B cell (primary cell): ENCODE measurements at regions of chr7 and their contacts with region 1.

Region 1: DNA sequence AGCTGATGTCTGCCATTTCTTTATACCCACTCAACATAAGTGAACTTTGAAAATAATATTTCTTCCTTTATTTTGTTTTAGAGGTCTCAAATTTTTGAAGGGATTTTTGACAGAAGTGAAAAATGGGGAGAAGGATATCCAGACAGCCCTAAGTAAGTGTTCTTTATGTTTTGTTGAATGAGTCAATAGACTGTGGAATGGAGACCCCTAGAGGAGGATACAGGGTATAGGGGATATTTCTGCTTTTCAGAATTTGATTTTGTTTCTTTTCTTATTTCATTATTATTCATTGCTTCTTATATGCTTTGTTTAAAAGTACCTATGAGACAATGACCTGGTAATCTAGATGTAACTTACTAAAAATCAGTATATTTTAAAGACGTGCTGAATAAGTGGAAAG is 34.4 kb downstream of the PLEKHA8 start:
- DNase-seq: peak; percentile 56
- ATAC-seq: peak; percentile 67
- H3K4me3 ChIP-seq: no peak overlapping the region
- H3K4me3 Mint-ChIP-seq: no peak overlapping the region
- H3K27ac ChIP-seq: no peak overlapping the region
- H3K27ac Mint-ChIP-seq: peak overlapping the region; percentile 59
- H3K4me1 ChIP-seq: peaks cover 5 to 6% of the 10 kb centered on the region in 2 donors
- H3K4me1 Mint-ChIP-seq: peaks cover 14% of the 10 kb centered on the region
- H3K27me3 ChIP-seq: no peaks in the 10 kb centered on the region
- H3K27me3 Mint-ChIP-seq: no peaks in the 10 kb centered on the region
- CTCF ChIP-seq: peak; percentile 76

Region 2: DNA sequence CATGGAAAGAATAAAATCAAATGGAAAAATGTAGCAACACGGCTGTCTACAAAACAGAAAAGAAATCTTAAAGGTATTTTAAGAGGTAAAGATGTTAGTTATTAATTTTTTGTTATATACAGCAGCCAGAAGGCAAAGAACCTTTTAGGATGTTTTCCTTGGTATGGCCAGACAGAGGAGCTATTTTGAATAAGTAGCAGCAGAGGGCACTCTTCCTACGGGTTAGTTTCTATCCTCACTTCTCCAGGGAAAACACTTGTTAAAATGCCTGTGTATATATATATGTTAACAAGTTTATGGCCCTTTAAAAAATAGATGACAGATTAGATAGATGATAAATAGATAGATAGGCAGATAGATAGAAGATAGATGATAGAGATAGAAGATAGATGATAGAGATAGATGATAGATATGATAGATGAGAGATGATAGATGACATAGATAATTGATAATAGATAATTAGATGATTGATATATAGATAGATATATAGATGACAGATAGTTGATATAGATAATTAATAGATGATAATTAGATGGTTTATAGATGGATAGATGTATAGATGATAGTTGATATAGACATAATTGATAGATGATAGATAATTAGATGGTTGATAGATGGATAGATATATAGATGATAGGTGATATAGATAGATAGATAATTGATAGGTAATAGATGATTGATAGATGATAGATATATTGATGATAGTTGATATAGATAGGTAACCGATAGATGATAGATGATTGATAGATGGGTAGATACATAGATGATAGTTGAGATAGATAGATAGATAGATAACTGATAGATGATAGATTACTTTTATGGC is 314.1 kb before region 1 on chr7:
- CTCF ChIA-PET with region 1: no interaction called
- POLR2A ChIA-PET with region 1: no interaction called
- intact Hi-C with region 1: loop called (anchors 5 kb)
- DNase-seq: no peak
- ATAC-seq: no peak
- H3K4me3 ChIP-seq: no peak overlapping the region
- H3K4me3 Mint-ChIP-seq: no peak overlapping the region
- H3K27ac ChIP-seq: no peak overlapping the region
- H3K27ac Mint-ChIP-seq: no peak overlapping the region
- H3K4me1 ChIP-seq: no peaks in the 10 kb centered on the region
- H3K4me1 Mint-ChIP-seq: no peaks in the 10 kb centered on the region
- H3K27me3 ChIP-seq: no peaks in the 10 kb centered on the region
- H3K27me3 Mint-ChIP-seq: peaks cover 8% of the 10 kb centered on the region
- CTCF ChIP-seq: peak; percentile 12

Region 3: GRCh38 chr7:29921404-29922010 is 141.1 kb before region 1 on chr7:
- CTCF ChIA-PET with region 1: interaction called, 50 read pairs
- POLR2A ChIA-PET with region 1: no interaction called
- intact Hi-C with region 1: no loop called
- DNase-seq: peak; percentile 69
- ATAC-seq: peak; percentile 83
- H3K4me3 ChIP-seq: no peak overlapping the region
- H3K4me3 Mint-ChIP-seq: no peak overlapping the region
- H3K27ac ChIP-seq: no peak overlapping the region
- H3K27ac Mint-ChIP-seq: no peak overlapping the region
- H3K4me1 ChIP-seq: no peaks in the 10 kb centered on the region
- H3K4me1 Mint-ChIP-seq: no peaks in the 10 kb centered on the region
- H3K27me3 ChIP-seq: no peaks in the 10 kb centered on the region
- H3K27me3 Mint-ChIP-seq: no peaks in the 10 kb centered on the region
- CTCF ChIP-seq: peak; percentile 94

Region 4: DNA sequence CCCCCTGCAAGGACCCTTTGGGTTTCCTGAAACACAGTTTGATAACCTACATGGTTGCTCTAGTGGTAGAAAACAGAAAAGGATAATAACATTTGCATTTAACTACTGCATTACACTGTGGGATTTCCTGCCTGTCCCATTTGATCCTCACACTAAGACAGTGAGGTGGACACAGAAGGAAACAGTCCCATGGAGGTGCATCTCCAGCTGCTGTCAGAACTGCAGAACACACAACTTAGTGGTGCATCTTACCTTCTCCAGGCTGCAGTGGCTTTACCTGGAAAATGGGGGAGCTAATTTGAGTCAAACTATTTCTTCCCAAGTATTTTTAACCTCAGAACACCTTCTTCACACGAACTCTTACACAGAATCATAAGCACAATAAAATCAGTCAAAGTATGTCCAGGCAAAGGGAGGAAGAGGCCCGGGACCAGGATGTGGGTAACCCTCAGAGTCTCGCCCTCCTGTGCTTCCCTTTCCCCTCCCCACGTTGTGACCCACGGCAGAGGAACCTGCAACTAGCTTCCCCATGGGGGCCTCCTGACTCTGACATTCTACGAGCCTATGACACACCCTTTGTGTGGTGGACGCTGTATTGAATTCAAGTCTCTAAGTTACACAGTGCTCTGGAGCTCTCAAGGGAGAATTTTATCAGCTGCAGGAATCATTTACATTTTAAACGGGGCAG is 106.6 kb before region 1 on chr7:
- CTCF ChIA-PET with region 1: interaction called, 48 read pairs
- POLR2A ChIA-PET with region 1: no interaction called
- intact Hi-C with region 1: loop called (anchors 2 kb)
- DNase-seq: peak; percentile 42
- ATAC-seq: peak; percentile 77
- H3K4me3 ChIP-seq: no peak overlapping the region
- H3K4me3 Mint-ChIP-seq: peak overlapping the region; percentile 46
- H3K27ac ChIP-seq: peak overlapping the region in 1 of 2 donors; percentile 34
- H3K27ac Mint-ChIP-seq: peak overlapping the region; percentile 67
- H3K4me1 ChIP-seq: peaks cover 14 to 20% of the 10 kb centered on the region in 2 donors
- H3K4me1 Mint-ChIP-seq: peaks cover 32% of the 10 kb centered on the region
- H3K27me3 ChIP-seq: no peaks in the 10 kb centered on the region
- H3K27me3 Mint-ChIP-seq: no peaks in the 10 kb centered on the region
- CTCF ChIP-seq: no peak

Region 5: GRCh38 chr7:30026229-30027064 is 36.1 kb before region 1 on chr7 and contains the start of gene FKBP14:
- CTCF ChIA-PET with region 1: interaction called, 23 read pairs
- POLR2A ChIA-PET with region 1: no interaction called
- intact Hi-C with region 1: loop called (anchors 1 kb)
- DNase-seq: peak; percentile 94
- ATAC-seq: peak; percentile 76
- H3K4me3 ChIP-seq: peak within 1 kb of the TSS; percentile 84 to 97 (median 90)
- H3K4me3 Mint-ChIP-seq: peak within 1 kb of the TSS; percentile 90
- H3K27ac ChIP-seq: peak within 1 kb of the TSS; percentile 77 to 84
- H3K27ac Mint-ChIP-seq: peak within 1 kb of the TSS; percentile 95
- H3K4me1 ChIP-seq: peaks cover 20 to 27% of the 10 kb centered on the region in 2 donors
- H3K4me1 Mint-ChIP-seq: peaks cover 30% of the 10 kb centered on the region
- H3K27me3 ChIP-seq: no peaks in the 10 kb centered on the region
- H3K27me3 Mint-ChIP-seq: no peaks in the 10 kb centered on the region
- CTCF ChIP-seq: no peak
- total RNA-seq, gene FKBP14: 4.2 and 5.7 TPM in 2 replicates

Region 6: DNA sequence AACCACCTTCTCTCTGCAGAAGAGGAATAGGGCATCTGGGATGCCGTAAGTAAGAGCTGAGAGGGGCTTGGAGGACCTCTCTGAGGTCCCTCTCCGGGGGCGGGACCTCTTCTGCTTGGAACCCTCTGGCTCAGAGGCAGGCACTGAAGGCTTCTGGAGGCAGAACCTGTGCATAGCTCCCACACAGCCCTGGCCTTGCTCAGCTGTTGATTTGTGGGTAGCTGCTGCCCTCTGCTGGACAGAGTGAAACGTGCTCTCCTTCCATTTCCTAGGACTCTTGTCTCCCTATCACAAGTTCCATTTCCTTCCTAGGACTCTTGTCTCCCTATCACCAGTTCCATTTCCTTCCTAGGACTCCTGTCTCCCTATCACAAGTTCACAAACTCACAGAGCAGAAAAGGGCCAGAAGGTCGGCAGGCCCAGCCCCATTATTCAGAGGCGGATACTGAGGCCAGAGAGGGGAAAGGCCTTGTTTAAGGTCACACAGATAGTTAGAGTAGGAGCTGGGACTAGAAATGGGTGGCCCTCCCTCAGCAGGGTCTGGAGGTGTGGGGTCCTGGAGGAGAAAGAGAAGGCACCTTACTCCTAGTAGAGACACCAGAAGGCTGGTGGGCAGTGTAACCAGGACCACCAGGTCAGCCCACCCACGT is 501.8 kb after region 1 on chr7:
- CTCF ChIA-PET with region 1: interaction called, 16 read pairs
- POLR2A ChIA-PET with region 1: no interaction called
- intact Hi-C with region 1: loop called (anchors 1 kb)
- DNase-seq: peak; percentile 80
- ATAC-seq: peak; percentile 93
- H3K4me3 ChIP-seq: no peak overlapping the region
- H3K4me3 Mint-ChIP-seq: no peak overlapping the region
- H3K27ac ChIP-seq: no peak overlapping the region
- H3K27ac Mint-ChIP-seq: no peak overlapping the region
- H3K4me1 ChIP-seq: no peaks in the 10 kb centered on the region
- H3K4me1 Mint-ChIP-seq: no peaks in the 10 kb centered on the region
- H3K27me3 ChIP-seq: no peaks in the 10 kb centered on the region
- H3K27me3 Mint-ChIP-seq: no peaks in the 10 kb centered on the region
- CTCF ChIP-seq: peak; percentile 92

Region 7: GRCh38 chr7:30682212-30683083 is 619.9 kb after region 1 on chr7 and contains the start of gene CRHR2:
- CTCF ChIA-PET with region 1: no interaction called
- POLR2A ChIA-PET with region 1: no interaction called
- intact Hi-C with region 1: no loop called
- DNase-seq: peak; percentile 40
- ATAC-seq: peak; percentile 49
- H3K4me3 ChIP-seq: peak within 1 kb of the TSS in 3 of 5 experiments; percentile 38 to 39 (median 39)
- H3K4me3 Mint-ChIP-seq: peak within 1 kb of the TSS; percentile 79
- H3K27ac ChIP-seq: no peak within 1 kb of the TSS
- H3K27ac Mint-ChIP-seq: no peak within 1 kb of the TSS
- H3K4me1 ChIP-seq: peaks cover 14 to 15% of the 10 kb centered on the region in 2 donors
- H3K4me1 Mint-ChIP-seq: peaks cover 15% of the 10 kb centered on the region
- H3K27me3 ChIP-seq: peaks cover 0 to 62% (median 14%) of the 10 kb centered on the region in 4 experiments
- H3K27me3 Mint-ChIP-seq: peaks cover 78% of the 10 kb centered on the region
- CTCF ChIP-seq: peak; percentile 9
- total RNA-seq, gene CRHR2: not detected in 2 replicates

Region 8: DNA sequence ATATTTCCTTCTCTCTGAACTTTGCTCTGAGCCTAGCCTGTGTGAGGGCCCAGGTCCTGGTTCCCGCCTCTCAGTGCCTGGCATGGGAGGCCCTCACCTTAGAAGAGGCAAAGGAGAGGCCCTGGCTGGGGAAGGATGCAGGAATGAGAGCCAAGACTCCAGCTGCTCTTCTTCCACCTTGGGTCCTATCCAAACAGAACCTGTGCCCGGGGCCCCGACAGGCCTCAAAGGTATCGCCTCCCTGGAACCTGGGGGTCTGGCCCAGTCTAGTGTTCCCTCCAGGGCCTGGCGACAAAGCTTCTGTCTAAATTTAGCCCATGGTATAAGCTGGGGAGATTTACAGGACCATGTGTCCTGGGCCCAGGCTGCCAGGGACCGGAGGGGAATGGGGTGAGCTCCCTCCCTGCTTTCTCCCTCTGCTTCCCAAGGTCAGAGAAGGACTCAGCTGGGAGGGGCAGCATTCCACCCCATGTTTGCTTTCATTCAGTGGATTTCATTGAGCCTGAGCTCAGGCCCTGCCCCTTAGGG is 631.7 kb after region 1 on chr7:
- CTCF ChIA-PET with region 1: no interaction called
- POLR2A ChIA-PET with region 1: no interaction called
- intact Hi-C with region 1: no loop called
- DNase-seq: no peak
- ATAC-seq: no peak
- H3K4me3 ChIP-seq: no peak overlapping the region
- H3K4me3 Mint-ChIP-seq: no peak overlapping the region
- H3K27ac ChIP-seq: no peak overlapping the region
- H3K27ac Mint-ChIP-seq: no peak overlapping the region
- H3K4me1 ChIP-seq: no peaks in the 10 kb centered on the region
- H3K4me1 Mint-ChIP-seq: no peaks in the 10 kb centered on the region
- H3K27me3 ChIP-seq: peaks cover 0 to 4% (median 0%) of the 10 kb centered on the region in 4 experiments
- H3K27me3 Mint-ChIP-seq: peaks cover 23% of the 10 kb centered on the region
- CTCF ChIP-seq: no peak